Thyroid gland (tissue), 4 donors: ENCODE measurements at regions of chr15 and their contacts with region 1.

Region 1: GRCh38 chr15:55630858-55631257 is 42.7 kb upstream of the PYGO1 start:
- DNase-seq: peak; percentile 59 to 69
- H3K4me3 ChIP-seq: no peak overlapping the region
- H3K27ac ChIP-seq: peak overlapping the region; percentile 29 to 82 (median 69)
- H3K4me1 ChIP-seq: peaks cover 14 to 15% of the 10 kb centered on the region in 2 donors
- H3K27me3 ChIP-seq: no peaks in the 10 kb centered on the region
- CTCF ChIP-seq: no peak
- POLR2A ChIP-seq: no peak

Region 2: GRCh38 chr15:55526559-55527036 is 104.3 kb before region 1 on chr15:
- intact Hi-C with region 1: loop called (anchors 10 kb)
- DNase-seq: peak in 1 of 2 donors; percentile 25
- H3K4me3 ChIP-seq: no peak overlapping the region
- H3K27ac ChIP-seq: no peak overlapping the region
- H3K4me1 ChIP-seq: peaks cover 0 to 21% of the 10 kb centered on the region in 2 donors
- H3K27me3 ChIP-seq: no peaks in the 10 kb centered on the region
- CTCF ChIP-seq: peak in 5 of 6 experiments; percentile 30 to 66 (median 61)
- POLR2A ChIP-seq: no peak

Region 3: DNA sequence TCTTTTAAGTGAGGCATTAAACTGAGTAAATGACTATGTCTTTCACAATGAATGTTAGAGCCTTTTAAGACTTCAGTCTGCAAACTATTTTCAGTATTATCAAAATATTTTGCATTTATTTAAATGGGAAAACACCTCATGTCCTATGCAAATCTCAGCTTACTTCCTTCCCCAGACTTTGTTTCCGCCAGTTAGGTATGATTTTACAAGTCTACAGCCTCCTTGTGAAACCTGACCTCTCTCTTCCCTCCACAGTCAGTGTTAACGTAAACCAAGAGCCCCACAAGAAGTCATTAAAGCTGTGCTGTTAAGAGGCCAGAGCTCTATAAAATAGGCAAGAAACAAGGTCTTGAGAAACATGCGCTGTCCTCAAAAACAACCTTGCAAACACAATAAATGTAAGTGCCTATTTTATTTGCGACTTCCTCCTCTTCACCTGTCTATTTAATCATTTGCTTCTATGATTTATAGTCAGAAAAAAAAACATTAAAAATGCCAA is 63.8 kb after region 1 on chr15:
- intact Hi-C with region 1: no loop called
- DNase-seq: no peak
- H3K4me3 ChIP-seq: no peak overlapping the region
- H3K27ac ChIP-seq: no peak overlapping the region
- H3K4me1 ChIP-seq: no peaks in the 10 kb centered on the region
- H3K27me3 ChIP-seq: no peaks in the 10 kb centered on the region
- CTCF ChIP-seq: no peak
- POLR2A ChIP-seq: no peak